Activated naive CD4-positive, alpha-beta T cell treated with anti-CD3 and anti-CD28 coated beads for 36 hours (primary cell): ENCODE measurements at regions of chr7 and their contacts with region 1.

Region 1: DNA sequence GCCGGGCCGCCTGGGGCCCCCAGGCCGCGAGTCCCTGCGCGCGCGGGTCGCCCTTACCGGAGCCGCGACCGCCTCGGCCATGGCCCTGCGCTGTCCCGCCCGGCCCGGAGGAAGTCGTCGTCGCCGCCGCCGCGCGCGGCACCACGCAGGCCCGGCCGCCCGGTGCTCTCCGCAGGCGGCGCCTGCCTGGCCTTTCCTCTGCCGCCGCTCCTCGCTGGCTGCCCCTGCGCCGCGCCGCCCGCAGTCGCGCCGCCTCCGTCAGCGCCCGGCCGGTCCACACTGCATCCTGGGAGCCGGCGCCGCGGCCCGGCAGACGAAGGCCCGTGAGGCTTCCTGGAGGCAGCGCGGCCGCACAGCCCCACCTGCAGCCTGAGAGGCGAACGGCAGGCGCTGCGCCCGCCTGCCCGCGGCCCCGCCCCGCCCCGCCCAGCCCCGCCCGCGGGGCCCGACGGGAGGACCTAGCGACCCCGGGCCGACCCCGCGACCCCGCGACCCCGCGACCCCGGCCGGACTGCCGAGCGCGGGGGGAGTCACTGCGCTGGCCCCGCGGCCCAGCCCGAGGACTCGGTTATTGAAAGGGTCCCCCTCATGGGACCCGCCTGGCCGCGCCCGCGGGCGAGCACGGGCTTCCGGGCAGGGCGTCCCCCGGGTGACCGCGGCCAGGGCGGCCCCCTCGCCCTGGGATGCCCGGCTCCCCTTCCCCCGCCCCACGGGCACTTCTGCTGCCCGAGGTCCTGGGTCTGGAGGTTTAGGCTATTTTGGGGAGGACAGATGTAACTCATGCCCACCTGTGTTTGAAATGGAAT is at the start of gene ZNF746:
- DNase-seq: peak; percentile 84
- H3K4me3 Mint-ChIP-seq: peak within 1 kb of the TSS; percentile 93
- H3K27ac Mint-ChIP-seq: peak within 1 kb of the TSS; percentile 90
- H3K4me1 Mint-ChIP-seq: peaks cover 24% of the 10 kb centered on the region
- H3K27me3 Mint-ChIP-seq: peaks cover 2% of the 10 kb centered on the region
- total RNA-seq, gene ZNF746: 11.8 to 12.0 TPM

Region 2: GRCh38 chr7:149195180-149196150 is 302.2 kb before region 1 on chr7 and contains the start of gene ZNF282:
- CTCF ChIA-PET with region 1: interaction called, 5 read pairs
- intact Hi-C with region 1: loop called (anchors 2 kb)
- DNase-seq: peak; percentile 85
- H3K4me3 Mint-ChIP-seq: peak within 1 kb of the TSS; percentile 85
- H3K27ac Mint-ChIP-seq: peak within 1 kb of the TSS; percentile 78
- H3K4me1 Mint-ChIP-seq: peaks cover 30% of the 10 kb centered on the region
- H3K27me3 Mint-ChIP-seq: no peaks in the 10 kb centered on the region
- total RNA-seq, gene ZNF282: 21.6 to 22.0 TPM

Region 3: GRCh38 chr7:149239345-149240191 is 258.1 kb before region 1 on chr7 and contains the start of gene ZNF212:
- CTCF ChIA-PET with region 1: no interaction called
- intact Hi-C with region 1: loop called (anchors 1 kb)
- DNase-seq: peak; percentile 93
- H3K4me3 Mint-ChIP-seq: peak within 1 kb of the TSS; percentile 89
- H3K27ac Mint-ChIP-seq: peak within 1 kb of the TSS; percentile 90
- H3K4me1 Mint-ChIP-seq: peaks cover 38% of the 10 kb centered on the region
- H3K27me3 Mint-ChIP-seq: no peaks in the 10 kb centered on the region
- total RNA-seq, gene ZNF212: 9.0 to 10.4 TPM

Region 4: GRCh38 chr7:149310113-149310836 is 187.4 kb before region 1 on chr7:
- CTCF ChIA-PET with region 1: no interaction called
- intact Hi-C with region 1: loop called (anchors 1 kb)
- DNase-seq: no peak
- H3K4me3 Mint-ChIP-seq: no peak overlapping the region
- H3K27ac Mint-ChIP-seq: no peak overlapping the region
- H3K4me1 Mint-ChIP-seq: peaks cover 2% of the 10 kb centered on the region
- H3K27me3 Mint-ChIP-seq: no peaks in the 10 kb centered on the region

Region 5: DNA sequence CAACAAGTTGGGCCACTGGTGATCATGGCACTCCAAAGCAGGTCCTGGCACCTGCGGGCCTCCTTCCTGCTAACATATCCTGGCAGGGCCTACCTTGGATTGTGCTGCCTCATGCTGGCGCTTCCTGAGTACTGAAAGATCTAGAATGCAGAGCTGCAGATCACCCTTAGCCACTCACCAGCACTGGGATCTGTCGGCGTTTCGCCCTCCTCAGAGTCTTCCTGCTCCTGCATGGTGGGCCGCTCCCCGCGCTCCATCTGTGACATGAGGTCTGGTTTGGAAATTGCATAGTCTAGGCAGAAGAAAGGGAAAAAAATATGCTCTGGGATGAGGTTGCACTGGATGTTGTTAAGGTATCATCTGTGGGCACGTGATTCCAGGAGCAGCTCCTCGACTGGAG is 46.8 kb before region 1 on chr7:
- CTCF ChIA-PET with region 1: no interaction called
- intact Hi-C with region 1: no loop called
- DNase-seq: no peak
- H3K4me3 Mint-ChIP-seq: no peak overlapping the region
- H3K27ac Mint-ChIP-seq: no peak overlapping the region
- H3K4me1 Mint-ChIP-seq: no peaks in the 10 kb centered on the region
- H3K27me3 Mint-ChIP-seq: no peaks in the 10 kb centered on the region

Region 6: GRCh38 chr7:149598721-149599306 is 101.2 kb after region 1 on chr7:
- CTCF ChIA-PET with region 1: interaction called, 5 read pairs
- intact Hi-C with region 1: loop called (anchors 1 kb)
- DNase-seq: peak; percentile 69
- H3K4me3 Mint-ChIP-seq: no peak overlapping the region
- H3K27ac Mint-ChIP-seq: peak overlapping the region; percentile 51
- H3K4me1 Mint-ChIP-seq: peaks cover 36% of the 10 kb centered on the region
- H3K27me3 Mint-ChIP-seq: no peaks in the 10 kb centered on the region